ENCODE measurements at regions of chrX and their contacts with region 1.

Region 1: GRCh38 chrX:130268500-130269170 is at the start of gene ZNF280C:
- DNase-seq: peak; percentile 92 to 97 (median 92)
- ATAC-seq: peak; percentile 97
- H3K4me3 ChIP-seq: peak within 1 kb of the TSS; percentile 90
- H3K27ac ChIP-seq: peak within 1 kb of the TSS; percentile 93
- H3K4me1 ChIP-seq: peaks cover 4 to 8% of the 10 kb centered on the region in 2 experiments; a peak in 4 of 5 replicates
- H3K27me3 ChIP-seq: no peaks in the 10 kb centered on the region
- CTCF ChIP-seq: peak; percentile 60 to 71 (median 62)
- EP300 ChIP-seq: peak; percentile 32; the same call in 1 of the 2 replicates
- POLR2A ChIP-seq: peak; percentile 94
- RAD21 ChIP-seq: peak in 1 of 2 experiments; percentile 19; a peak in 1 of 4 replicates
- polyA plus RNA-seq, gene ZNF280C: 1.6 to 1.8 TPM

Region 2: GRCh38 chrX:130086447-130087206 is 182.0 kb before region 1 on chrX:
- CTCF ChIA-PET with region 1: no interaction called
- POLR2A ChIA-PET with region 1: interaction called, 3 read pairs
- in situ Hi-C with region 1: no loop called
- intact Hi-C with region 1: loop called (anchors 5 kb)
- DNase-seq: peak in 1 of 4 experiments; percentile 15
- ATAC-seq: no peak
- H3K4me3 ChIP-seq: no peak overlapping the region
- H3K27ac ChIP-seq: peak overlapping the region; percentile 38; the same call in 1 of the 3 replicates
- H3K4me1 ChIP-seq: peaks cover 61 to 65% of the 10 kb centered on the region in 2 experiments
- H3K27me3 ChIP-seq: no peaks in the 10 kb centered on the region
- CTCF ChIP-seq: no peak
- EP300 ChIP-seq: no peak
- POLR2A ChIP-seq: no peak
- RAD21 ChIP-seq: no peak

Region 3: GRCh38 chrX:130111220-130112154 is 157.1 kb before region 1 on chrX:
- CTCF ChIA-PET with region 1: no interaction called
- POLR2A ChIA-PET with region 1: no interaction called
- in situ Hi-C with region 1: no loop called
- intact Hi-C with region 1: no loop called
- DNase-seq: peak; percentile 26 to 49 (median 31)
- ATAC-seq: peak; percentile 15
- H3K4me3 ChIP-seq: peak overlapping the region; percentile 32
- H3K27ac ChIP-seq: peak overlapping the region; percentile 84
- H3K4me1 ChIP-seq: peaks cover 31 to 49% of the 10 kb centered on the region in 2 experiments
- H3K27me3 ChIP-seq: no peaks in the 10 kb centered on the region
- CTCF ChIP-seq: no peak
- EP300 ChIP-seq: no peak
- POLR2A ChIP-seq: 0 out of 2 replicates have a peak, but pooled peaks have one; percentile 22
- RAD21 ChIP-seq: no peak

Measured in K562 (cell line).